Dendritic cell treated with granulocyte-macrophage colony-stimulating factor and Interleukin-4, amounts not matched to agents 40 ng/mL and 50 ng/mL, for 4 days (primary cell): ENCODE measurements at regions of chr15 and their contacts with region 1.

Region 1: DNA sequence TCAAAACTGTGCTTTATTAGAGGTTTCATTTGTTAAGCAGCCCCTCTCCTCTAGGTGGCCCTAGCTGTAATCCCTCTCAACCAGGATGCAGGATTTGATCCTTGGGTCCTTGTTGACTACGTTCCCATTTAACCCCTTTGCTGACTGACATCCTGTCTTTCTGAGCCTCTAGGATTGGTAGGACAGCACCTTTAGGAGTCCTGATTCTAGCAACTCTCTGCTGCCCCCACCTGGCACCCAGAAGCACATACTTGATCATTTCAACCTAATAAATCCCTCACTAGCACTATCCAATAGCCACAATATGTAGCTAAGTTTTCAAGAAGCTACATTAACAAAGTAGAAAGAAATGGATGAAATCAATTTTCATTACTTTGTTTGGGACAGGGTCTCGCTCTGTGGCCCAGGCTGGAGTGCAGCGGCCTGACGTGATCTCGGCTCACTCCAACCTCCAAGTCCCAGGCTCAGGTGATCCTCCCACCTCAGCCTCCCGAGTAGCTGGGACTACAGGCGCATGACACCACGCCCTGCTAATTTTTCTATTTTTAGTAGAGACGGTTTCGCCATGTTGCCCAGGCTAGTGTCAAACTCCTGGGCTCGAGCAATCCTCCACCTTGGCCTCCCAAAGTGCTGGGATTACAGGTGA is 28.3 kb downstream of the RSL24D1 start:
- H3K4me3 Mint-ChIP-seq: no peak overlapping the region
- H3K27ac Mint-ChIP-seq: no peak overlapping the region
- H3K4me1 Mint-ChIP-seq: no peaks in the 10 kb centered on the region
- H3K27me3 Mint-ChIP-seq: no peaks in the 10 kb centered on the region

Region 2: GRCh38 chr15:53808058-53808706 is 1360.3 kb before region 1 on chr15:
- intact Hi-C with region 1: loop called (anchors 5 kb)
- H3K4me3 Mint-ChIP-seq: no peak overlapping the region
- H3K27ac Mint-ChIP-seq: no peak overlapping the region
- H3K4me1 Mint-ChIP-seq: no peaks in the 10 kb centered on the region
- H3K27me3 Mint-ChIP-seq: no peaks in the 10 kb centered on the region

Region 3: GRCh38 chr15:53962332-53963241 is 1205.9 kb before region 1 on chr15:
- intact Hi-C with region 1: loop called (anchors 1 kb)
- H3K4me3 Mint-ChIP-seq: no peak overlapping the region
- H3K27ac Mint-ChIP-seq: no peak overlapping the region
- H3K4me1 Mint-ChIP-seq: no peaks in the 10 kb centered on the region
- H3K27me3 Mint-ChIP-seq: no peaks in the 10 kb centered on the region

Region 4: DNA sequence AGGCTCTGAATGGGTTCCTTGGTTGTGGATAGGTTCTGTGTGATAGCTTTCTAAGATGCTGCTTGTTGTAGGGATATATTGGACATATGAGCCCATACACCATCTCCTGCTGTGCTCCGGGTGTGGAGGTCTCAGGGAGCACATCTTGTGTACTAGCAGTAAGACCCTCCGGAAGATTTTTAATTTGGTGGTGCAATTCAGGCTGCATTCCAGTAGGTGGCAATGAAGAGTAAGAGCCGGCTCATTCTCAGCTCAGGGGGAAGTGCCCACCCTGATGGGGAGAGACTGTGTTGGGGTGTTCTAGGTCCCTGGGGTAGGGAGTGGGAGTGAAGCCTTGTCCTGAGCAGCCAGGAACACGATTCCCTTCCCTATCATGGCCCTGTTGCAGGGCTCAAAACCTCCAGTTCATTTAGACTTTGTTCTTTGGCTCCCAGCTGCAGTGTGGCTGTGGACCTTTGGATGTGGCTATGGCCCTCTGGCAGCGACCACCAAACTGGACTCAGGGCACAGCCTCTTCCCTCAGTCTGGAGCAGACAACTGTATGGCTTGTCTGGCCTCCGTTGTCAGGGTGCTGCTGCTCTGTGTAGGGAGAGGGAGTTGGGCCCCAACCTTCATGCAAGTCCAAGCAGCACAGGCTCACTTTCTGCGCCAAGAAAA is 1085.5 kb before region 1 on chr15:
- intact Hi-C with region 1: loop called (anchors 1 kb)
- H3K4me3 Mint-ChIP-seq: no peak overlapping the region
- H3K27ac Mint-ChIP-seq: no peak overlapping the region
- H3K4me1 Mint-ChIP-seq: no peaks in the 10 kb centered on the region
- H3K27me3 Mint-ChIP-seq: peaks cover 2% of the 10 kb centered on the region

Region 5: GRCh38 chr15:56040081-56041035 is 871.9 kb after region 1 on chr15:
- intact Hi-C with region 1: no loop called
- H3K4me3 Mint-ChIP-seq: no peak overlapping the region
- H3K27ac Mint-ChIP-seq: no peak overlapping the region
- H3K4me1 Mint-ChIP-seq: no peaks in the 10 kb centered on the region
- H3K27me3 Mint-ChIP-seq: no peaks in the 10 kb centered on the region